ENCODE measurements at regions of chr2 and their contacts with region 1.

Region 1: DNA sequence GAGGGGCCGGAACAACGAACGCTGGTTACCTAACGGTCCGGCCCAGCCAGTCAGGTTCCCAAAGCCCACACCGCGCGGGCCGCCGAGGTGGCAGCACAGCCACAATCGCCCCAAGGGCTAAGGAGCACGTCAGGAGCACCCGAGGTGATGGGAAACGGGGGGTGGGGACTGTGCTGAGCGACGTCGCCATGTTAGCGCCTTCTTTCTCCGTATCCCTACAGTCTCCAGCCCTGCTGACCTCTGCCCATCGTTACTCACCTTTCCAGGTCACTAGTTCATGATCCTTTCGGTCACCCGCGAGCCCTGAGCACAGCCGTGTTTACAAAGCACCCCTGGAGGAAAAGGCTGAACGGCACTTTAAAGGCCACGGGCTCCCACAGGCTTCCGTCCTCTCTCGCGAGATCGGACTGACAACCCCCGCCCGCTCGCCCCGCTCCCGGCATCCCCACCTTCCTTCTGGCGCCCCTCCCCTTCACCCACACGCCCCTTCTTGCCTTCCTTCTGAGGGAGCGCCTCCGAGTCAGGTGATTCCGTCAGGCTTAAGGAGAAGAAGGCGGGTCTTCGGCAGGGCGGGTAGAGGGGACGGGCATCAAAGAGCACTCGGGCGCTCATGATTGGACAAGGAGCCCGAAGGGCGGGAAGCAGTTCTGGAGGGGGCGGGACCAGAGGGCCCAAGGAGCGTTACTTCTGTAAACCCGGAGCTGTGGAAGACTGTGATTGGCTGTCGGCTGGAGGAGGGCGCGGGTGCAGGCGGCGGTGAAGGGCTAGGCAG is at the start of gene ATF2:
- DNase-seq: peak; percentile 99
- ATAC-seq: peak; percentile 91
- H3K4me3 ChIP-seq: peak within 1 kb of the TSS; percentile 93 to 98 (median 97)
- H3K4me3 Mint-ChIP-seq: peak within 1 kb of the TSS; percentile 99
- H3K27ac ChIP-seq: peak within 1 kb of the TSS; percentile 86 to 91
- H3K27ac Mint-ChIP-seq: peak within 1 kb of the TSS; percentile 93
- H3K4me1 ChIP-seq: peaks cover 5 to 21% of the 10 kb centered on the region in 2 donors
- H3K4me1 Mint-ChIP-seq: peaks cover 33% of the 10 kb centered on the region
- H3K27me3 ChIP-seq: no peaks in the 10 kb centered on the region
- H3K27me3 Mint-ChIP-seq: no peaks in the 10 kb centered on the region
- CTCF ChIP-seq: no peak
- total RNA-seq, gene ATF2: 66.8 and 69.9 TPM in 2 replicates

Region 2: GRCh38 chr2:175181104-175181876 is 13.3 kb after region 1 on chr2 and contains the start of gene ATP5MC3:
- CTCF ChIA-PET with region 1: interaction called, 4 read pairs
- POLR2A ChIA-PET with region 1: no interaction called
- intact Hi-C with region 1: loop called (anchors 1 kb)
- DNase-seq: peak; percentile 95
- ATAC-seq: peak; percentile 95
- H3K4me3 ChIP-seq: peak within 1 kb of the TSS; percentile 81 to 94 (median 88)
- H3K4me3 Mint-ChIP-seq: peak within 1 kb of the TSS; percentile 91
- H3K27ac ChIP-seq: peak within 1 kb of the TSS; percentile 59 to 79
- H3K27ac Mint-ChIP-seq: peak within 1 kb of the TSS; percentile 78
- H3K4me1 ChIP-seq: peaks cover 12 to 13% of the 10 kb centered on the region in 2 donors
- H3K4me1 Mint-ChIP-seq: peaks cover 14% of the 10 kb centered on the region
- H3K27me3 ChIP-seq: no peaks in the 10 kb centered on the region
- H3K27me3 Mint-ChIP-seq: peaks cover 3% of the 10 kb centered on the region
- CTCF ChIP-seq: peak; percentile 22
- total RNA-seq, gene ATP5MC3: 68.5 and 68.9 TPM in 2 replicates

Region 3: DNA sequence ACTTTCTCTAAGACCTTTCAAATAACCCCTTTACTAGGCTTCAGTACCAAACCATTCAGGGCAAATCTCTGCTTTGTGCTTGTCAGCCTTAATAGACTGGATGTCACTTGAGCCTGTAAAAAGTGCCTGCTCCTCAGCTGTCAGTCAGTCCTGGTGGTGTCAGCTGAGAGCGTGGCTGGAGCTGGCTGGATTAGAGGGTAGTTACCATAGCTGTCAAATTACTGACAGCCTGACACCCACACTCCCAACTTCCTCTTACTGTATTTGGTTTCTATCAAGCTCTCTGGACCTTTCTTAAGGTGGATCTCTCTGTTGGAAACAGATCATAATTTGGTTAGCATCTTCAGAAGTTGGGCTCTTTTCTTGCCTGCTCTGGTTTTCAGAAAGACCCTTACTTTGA is 384.9 kb after region 1 on chr2:
- CTCF ChIA-PET with region 1: no interaction called
- POLR2A ChIA-PET with region 1: no interaction called
- intact Hi-C with region 1: no loop called
- DNase-seq: no peak
- ATAC-seq: no peak
- H3K4me3 ChIP-seq: no peak overlapping the region
- H3K4me3 Mint-ChIP-seq: no peak overlapping the region
- H3K27ac ChIP-seq: no peak overlapping the region
- H3K27ac Mint-ChIP-seq: no peak overlapping the region
- H3K4me1 ChIP-seq: no peaks in the 10 kb centered on the region
- H3K4me1 Mint-ChIP-seq: no peaks in the 10 kb centered on the region
- H3K27me3 ChIP-seq: no peaks in the 10 kb centered on the region
- H3K27me3 Mint-ChIP-seq: peaks cover 20% of the 10 kb centered on the region
- CTCF ChIP-seq: no peak

Region 4: DNA sequence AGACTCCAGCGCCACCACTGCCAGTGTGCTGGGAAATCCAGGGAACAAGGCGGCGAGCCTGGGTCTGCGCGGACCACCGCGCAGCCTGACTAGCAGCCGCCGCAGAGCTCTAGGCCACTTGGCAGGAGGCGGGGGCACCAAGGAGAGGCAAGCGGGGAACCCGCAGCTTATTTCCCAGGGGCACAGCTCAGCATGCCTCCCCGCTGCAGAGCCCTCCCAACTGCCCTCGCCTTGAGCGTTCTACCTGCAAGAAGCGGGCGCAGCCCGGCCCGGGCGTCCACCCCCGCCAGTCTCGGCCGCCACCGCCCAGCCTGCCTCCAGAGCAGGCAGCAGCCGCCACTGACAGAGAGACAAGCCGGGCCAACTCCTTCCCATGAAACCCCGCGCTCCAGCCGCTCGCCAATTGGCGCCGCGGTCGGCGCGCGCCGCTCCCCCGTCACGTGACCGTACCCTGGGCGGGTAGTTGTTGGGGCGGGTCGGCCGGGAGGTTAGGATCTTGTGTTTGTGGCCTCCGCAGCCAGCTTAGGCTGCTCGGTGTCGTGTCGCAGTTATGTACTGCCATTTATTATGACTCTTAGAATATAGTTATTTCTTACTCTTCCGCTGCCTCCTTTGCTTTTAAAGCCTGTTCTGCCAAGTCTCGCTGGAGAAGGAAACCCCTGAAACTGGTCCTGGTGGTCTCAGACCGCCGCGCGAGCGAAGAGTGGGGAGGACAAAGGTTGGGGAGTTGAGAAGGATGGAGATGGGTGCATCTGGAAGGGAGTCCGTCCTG is 834.1 kb after region 1 on chr2 and contains the start of gene LNPK:
- CTCF ChIA-PET with region 1: no interaction called
- POLR2A ChIA-PET with region 1: no interaction called
- intact Hi-C with region 1: loop called (anchors 2 kb)
- DNase-seq: peak; percentile 90
- ATAC-seq: peak; percentile 91
- H3K4me3 ChIP-seq: peak within 1 kb of the TSS; percentile 36 to 84 (median 78)
- H3K4me3 Mint-ChIP-seq: peak within 1 kb of the TSS; percentile 85
- H3K27ac ChIP-seq: peak within 1 kb of the TSS; percentile 48 to 76
- H3K27ac Mint-ChIP-seq: peak within 1 kb of the TSS; percentile 18
- H3K4me1 ChIP-seq: peaks cover 12 to 14% of the 10 kb centered on the region in 2 donors
- H3K4me1 Mint-ChIP-seq: peaks cover 17% of the 10 kb centered on the region
- H3K27me3 ChIP-seq: no peaks in the 10 kb centered on the region
- H3K27me3 Mint-ChIP-seq: no peaks in the 10 kb centered on the region
- CTCF ChIP-seq: no peak
- total RNA-seq, gene LNPK: 15.9 and 16.7 TPM in 2 replicates